Thyroid gland (tissue), 4 donors: ENCODE measurements at regions of chr10 and their contacts with region 1.

Region 1: DNA sequence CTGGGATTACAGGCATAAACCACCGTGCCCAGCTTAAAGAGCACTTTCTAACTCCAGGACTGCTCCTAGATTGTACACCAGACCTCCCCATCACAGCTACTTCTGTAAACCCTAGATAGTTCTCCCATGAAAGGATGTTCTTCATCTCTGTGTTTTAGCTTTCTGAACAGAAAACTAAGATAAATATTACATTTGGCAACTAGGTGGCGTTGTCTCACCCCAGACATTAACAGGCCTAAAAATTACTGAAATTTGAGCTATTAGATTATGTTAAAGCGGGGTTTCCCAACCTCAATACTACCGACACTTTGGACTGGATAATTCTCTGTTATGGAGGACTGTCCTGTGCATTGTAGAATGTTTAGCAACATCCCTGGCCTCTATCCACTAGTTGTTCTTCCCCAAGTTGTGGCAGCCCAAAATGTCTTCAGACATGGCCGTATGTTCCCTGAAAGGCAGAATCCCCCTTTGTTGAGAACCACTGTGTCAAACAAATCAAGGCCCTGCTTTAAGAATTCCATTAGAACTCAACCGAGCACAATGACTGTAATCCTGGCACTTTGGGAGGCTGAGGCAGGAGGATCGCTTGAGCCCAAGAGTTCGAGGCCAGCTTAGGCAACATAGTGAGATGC is 19.1 kb downstream of the ATOH7 start:
- DNase-seq: no peak
- H3K4me3 ChIP-seq: no peak overlapping the region
- H3K27ac ChIP-seq: no peak overlapping the region
- H3K4me1 ChIP-seq: no peaks in the 10 kb centered on the region
- H3K27me3 ChIP-seq: no peaks in the 10 kb centered on the region
- CTCF ChIP-seq: peak in 5 of 6 experiments; percentile 24 to 55 (median 51)
- POLR2A ChIP-seq: no peak

Region 2: GRCh38 chr10:68301790-68302502 is 89.1 kb after region 1 on chr10:
- intact Hi-C with region 1: loop called (anchors 5 kb)
- DNase-seq: no peak
- H3K4me3 ChIP-seq: no peak overlapping the region
- H3K27ac ChIP-seq: no peak overlapping the region
- H3K4me1 ChIP-seq: no peaks in the 10 kb centered on the region
- H3K27me3 ChIP-seq: no peaks in the 10 kb centered on the region
- CTCF ChIP-seq: peak in 4 of 6 experiments; percentile 18 to 63 (median 48)
- POLR2A ChIP-seq: no peak